ENCODE measurements at regions of chrX and their contacts with region 1.

Region 1: DNA sequence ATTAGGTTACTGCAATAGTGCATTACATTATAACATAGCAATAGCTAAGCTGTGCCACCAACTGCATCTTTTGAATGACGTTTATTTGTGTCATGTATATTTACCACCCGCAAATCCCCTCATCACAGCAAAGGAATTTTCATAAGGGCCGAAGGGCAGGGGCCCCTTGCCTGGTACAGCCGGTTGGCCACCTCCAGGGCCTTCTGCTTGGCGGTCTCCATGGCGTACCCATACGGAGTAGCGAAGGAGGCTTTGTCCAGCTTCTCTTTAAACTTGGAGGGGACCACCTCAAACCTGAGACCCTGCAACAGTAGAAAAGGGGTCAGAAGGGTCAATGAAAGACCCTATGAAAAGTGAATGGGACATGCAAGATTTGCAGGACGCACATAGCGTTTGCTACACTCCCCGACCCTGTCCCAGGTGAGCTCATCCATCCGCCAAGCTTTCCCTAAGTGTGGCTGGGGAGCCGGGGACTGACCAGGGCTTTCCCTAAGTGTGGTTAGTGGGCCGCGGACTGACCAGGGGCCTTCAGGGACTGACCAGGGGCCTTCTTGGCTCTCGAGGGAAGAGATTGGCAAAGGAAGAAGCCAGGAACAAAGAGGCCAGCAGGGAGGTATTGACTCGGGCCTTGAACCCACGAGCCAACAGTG is 10.6 kb downstream of the ASMTL start:
- DNase-seq: peak in 1 of 5 donors; percentile 48
- H3K4me3 ChIP-seq: no peak overlapping the region
- H3K27ac ChIP-seq: no peak overlapping the region
- H3K4me1 ChIP-seq: no peaks in the 10 kb centered on the region
- H3K27me3 ChIP-seq: no peaks in the 10 kb centered on the region
- CTCF ChIP-seq: no peak

Region 2: DNA sequence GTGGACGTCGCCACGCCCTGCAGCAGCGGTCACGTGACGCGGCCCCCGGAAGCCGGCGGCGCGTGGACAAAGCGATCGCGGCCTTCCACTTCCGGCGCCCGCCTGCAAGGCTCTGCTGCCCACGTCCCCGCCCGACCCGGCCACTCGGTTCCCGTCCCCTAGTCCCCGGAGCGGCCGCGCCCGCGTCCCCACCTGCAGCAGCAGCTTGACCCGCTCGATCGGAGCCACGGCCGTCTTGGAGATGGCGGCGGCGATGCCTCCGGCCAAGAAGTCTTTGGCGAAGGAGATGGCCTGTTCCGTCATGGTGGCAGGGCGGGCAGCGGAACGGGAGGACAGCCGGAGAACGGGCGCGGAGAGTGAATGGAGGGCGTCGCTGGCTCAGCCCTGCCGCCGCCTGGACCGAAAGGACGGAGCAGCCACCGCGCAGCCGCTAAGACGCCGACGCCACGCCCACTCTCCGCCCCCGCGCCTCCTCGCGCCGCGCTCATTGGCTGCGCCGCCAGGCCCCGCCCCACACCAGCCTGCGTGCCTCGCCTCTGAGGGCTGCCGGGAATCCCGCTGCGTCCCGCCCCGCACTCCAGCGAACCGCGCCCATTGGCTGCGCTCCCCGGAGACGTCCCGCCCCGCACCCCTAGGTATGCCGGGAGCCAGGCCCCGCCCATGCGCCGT is 50.3 kb before region 1 on chrX and contains the start of gene SLC25A6:
- intact Hi-C with region 1: loop called (anchors 10 kb)
- DNase-seq: peak; percentile 98 to 100 (median 99)
- H3K4me3 ChIP-seq: peak within 1 kb of the TSS; percentile 91 to 100 (median 99)
- H3K27ac ChIP-seq: peak within 1 kb of the TSS; percentile 98 to 100
- H3K4me1 ChIP-seq: peaks cover 0 to 21% (median 8%) of the 10 kb centered on the region in 3 donors
- H3K27me3 ChIP-seq: no peaks in the 10 kb centered on the region
- CTCF ChIP-seq: no peak
- total RNA-seq, gene SLC25A6: 357 TPM

Measured in kidney (tissue), 22 donors.